MCF 10A (cell line): ENCODE measurements at regions of chr9 and their contacts with region 1.

Region 1: DNA sequence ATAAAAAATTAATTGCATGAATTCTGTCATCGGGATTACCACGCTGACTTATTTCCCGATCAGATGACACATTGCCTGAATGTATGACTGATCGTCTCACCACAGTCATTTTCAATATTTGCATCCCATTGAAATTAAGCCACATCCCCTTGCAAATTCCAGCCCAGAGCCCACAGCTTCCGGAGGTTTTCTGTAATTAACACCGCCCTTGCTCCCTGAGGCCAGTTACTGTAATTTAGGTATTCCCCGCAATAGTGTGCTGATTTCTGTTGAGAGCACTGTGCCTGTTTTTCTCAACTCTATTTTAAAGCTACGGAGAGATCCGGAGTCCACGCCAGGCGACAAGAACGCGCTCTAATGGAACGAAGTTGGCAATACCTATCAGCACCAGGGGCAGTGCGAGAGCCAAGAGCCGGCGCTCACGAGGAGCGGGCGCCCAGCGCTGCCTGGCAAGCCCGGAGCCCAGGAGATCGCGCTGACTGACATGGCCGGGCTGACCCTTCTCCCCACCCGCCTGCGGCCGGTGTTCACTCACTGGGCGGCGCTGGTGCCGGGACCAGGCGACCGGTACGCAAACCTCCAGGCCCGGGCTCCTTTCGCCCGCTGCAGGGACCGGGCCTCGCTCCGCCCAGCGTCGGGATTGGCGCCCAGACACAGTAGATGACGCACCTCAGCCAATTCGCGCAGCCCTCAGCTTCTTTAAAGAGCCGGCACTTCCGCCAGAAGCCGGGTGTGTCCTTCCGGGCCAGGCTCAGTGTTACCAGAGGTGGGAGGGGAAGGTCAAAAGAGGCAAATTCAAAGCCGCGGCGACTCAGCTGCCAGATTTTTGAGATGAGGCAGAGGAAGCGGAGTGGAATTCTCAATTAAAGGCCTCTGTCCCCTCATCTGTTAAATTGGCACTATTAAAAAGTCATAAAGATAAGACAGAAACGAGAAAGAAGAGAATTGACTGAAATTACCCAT is at the start of gene PLGRKT:
- DNase-seq: peak; percentile 95
- H3K4me3 Mint-ChIP-seq: peak within 1 kb of the TSS; percentile 85
- H3K27ac Mint-ChIP-seq: peak within 1 kb of the TSS; percentile 85
- H3K4me1 Mint-ChIP-seq: no peaks in the 10 kb centered on the region
- H3K27me3 Mint-ChIP-seq: no peaks in the 10 kb centered on the region
- CTCF ChIP-seq: no peak
- total RNA-seq, gene PLGRKT: 21.6 and 22.5 TPM in 2 replicates

Region 2: DNA sequence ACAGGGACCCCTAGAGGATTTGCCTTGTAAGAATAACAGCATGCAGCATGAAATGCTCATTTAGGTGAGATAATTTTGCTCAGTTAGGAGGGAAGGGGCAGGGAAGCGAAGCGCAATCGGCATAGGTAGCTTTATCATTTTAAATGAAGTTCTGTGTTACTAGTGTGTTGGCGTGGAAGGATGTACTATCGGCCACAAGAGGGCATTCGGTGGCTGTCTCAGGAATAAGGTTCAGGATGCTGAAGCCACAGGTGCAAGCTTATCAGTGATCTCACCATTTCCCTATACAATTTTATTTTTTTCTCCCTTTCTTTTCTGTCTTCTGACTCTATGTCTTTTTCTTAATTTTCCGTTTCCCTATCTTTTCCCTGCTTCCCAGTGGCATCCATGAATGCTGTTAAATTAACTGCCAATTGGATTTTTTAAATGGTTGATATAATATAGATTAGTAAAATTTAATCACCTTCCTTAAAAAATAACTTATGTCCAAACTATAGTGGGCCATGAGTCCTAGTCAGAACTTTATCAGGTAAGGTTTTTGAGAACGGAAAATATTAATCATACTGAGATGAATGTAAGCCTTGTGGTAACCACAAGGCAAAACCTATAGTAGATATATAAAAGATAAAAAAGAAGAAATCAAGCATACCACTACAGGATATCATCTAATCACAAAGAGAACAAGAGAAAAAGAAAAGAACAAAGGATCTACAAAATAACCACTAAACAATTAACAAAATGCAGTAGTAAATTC is 250.9 kb before region 1 on chr9:
- CTCF ChIA-PET with region 1: interaction called, 25 read pairs
- POLR2A ChIA-PET with region 1: interaction called, 4 read pairs
- intact Hi-C with region 1: loop called (anchors 1 kb)
- DNase-seq: peak; percentile 75
- H3K4me3 Mint-ChIP-seq: no peak overlapping the region
- H3K27ac Mint-ChIP-seq: no peak overlapping the region
- H3K4me1 Mint-ChIP-seq: peaks cover 4% of the 10 kb centered on the region
- H3K27me3 Mint-ChIP-seq: peaks cover 26% of the 10 kb centered on the region
- CTCF ChIP-seq: peak; percentile 88

Region 3: GRCh38 chr9:5352637-5353455 is 84.7 kb before region 1 on chr9:
- CTCF ChIA-PET with region 1: no interaction called
- POLR2A ChIA-PET with region 1: no interaction called
- intact Hi-C with region 1: no loop called
- DNase-seq: no peak
- H3K4me3 Mint-ChIP-seq: no peak overlapping the region
- H3K27ac Mint-ChIP-seq: no peak overlapping the region
- H3K4me1 Mint-ChIP-seq: no peaks in the 10 kb centered on the region
- H3K27me3 Mint-ChIP-seq: no peaks in the 10 kb centered on the region
- CTCF ChIP-seq: no peak

Region 4: GRCh38 chr9:5450359-5451091 is 13.0 kb after region 1 on chr9 and contains the start of gene CD274:
- CTCF ChIA-PET with region 1: interaction called, 58 read pairs
- POLR2A ChIA-PET with region 1: interaction called, 40 read pairs
- intact Hi-C with region 1: no loop called
- DNase-seq: peak; percentile 92
- H3K4me3 Mint-ChIP-seq: peak within 1 kb of the TSS; percentile 84
- H3K27ac Mint-ChIP-seq: peak within 1 kb of the TSS; percentile 95
- H3K4me1 Mint-ChIP-seq: peaks cover 35% of the 10 kb centered on the region
- H3K27me3 Mint-ChIP-seq: no peaks in the 10 kb centered on the region
- CTCF ChIP-seq: peak; percentile 52
- total RNA-seq, gene CD274: 1.9 and 2.6 TPM in 2 replicates

Region 5: GRCh38 chr9:5593904-5594303 is 156.4 kb after region 1 on chr9:
- CTCF ChIA-PET with region 1: interaction called, 33 read pairs
- POLR2A ChIA-PET with region 1: interaction called, 3 read pairs
- intact Hi-C with region 1: loop called (anchors 1 kb)
- DNase-seq: no peak
- H3K4me3 Mint-ChIP-seq: no peak overlapping the region
- H3K27ac Mint-ChIP-seq: no peak overlapping the region
- H3K4me1 Mint-ChIP-seq: no peaks in the 10 kb centered on the region
- H3K27me3 Mint-ChIP-seq: no peaks in the 10 kb centered on the region
- CTCF ChIP-seq: no peak